Caco-2 (cell line): ENCODE measurements at regions of chr5 and their contacts with region 1.

Region 1: DNA sequence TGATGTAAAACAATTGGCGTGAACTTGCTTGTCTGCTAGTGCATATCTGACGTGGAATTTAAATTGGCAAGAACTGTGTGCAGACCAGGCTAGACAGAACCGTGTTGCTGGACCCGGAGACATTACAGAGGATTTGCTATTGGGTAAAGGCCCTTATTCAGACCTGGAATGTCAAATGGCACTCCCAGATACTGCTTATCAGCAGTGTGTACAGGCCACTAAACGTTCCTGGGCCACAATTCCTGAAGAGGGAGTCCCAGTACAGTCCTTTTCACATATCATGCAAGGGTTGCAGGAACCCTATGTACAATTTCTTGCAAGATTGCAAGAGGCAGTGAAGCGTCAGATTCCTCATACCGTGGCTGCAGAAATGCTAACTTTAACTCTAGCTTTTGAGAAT is 13.5 kb upstream of the MCCC2 start:
- DNase-seq: peak; percentile 52
- H3K4me3 ChIP-seq: no peak overlapping the region
- H3K4me3 Mint-ChIP-seq: no peak overlapping the region
- H3K27ac Mint-ChIP-seq: peak overlapping the region; percentile 71
- H3K4me1 ChIP-seq: peaks cover 15% of the 10 kb centered on the region
- H3K4me1 Mint-ChIP-seq: peaks cover 20% of the 10 kb centered on the region
- H3K27me3 ChIP-seq: no peaks in the 10 kb centered on the region
- H3K27me3 Mint-ChIP-seq: no peaks in the 10 kb centered on the region
- CTCF ChIP-seq: peak in 1 of 2 experiments; percentile 34

Region 2: DNA sequence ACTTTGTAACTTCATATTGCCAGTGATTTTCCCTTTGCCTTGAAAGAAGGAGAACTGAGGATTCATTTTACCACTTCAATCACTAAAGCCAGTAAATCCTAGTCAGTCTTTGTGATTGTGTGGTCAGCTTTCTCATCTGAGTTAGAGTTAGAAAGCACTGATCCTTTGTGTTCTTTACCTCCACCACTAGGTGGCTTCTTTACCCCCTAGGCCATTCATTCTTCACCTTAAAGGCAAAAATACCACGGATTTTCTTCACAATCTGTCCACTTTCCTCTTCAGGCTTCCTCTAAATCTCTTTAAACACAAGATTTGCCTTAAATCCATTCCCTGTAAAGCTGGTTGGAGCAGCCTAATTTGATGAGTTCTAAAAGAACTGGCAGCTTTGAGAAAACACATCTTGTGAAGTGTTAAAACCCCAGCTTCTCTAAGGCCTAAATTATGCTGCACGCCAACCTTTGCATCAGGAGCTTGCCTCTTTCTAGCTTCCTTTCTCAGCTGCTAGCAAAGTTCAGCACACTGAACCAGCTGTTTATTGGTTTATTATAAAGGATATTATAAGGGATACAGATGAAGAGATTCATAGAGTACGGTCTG is 97.7 kb before region 1 on chr5:
- CTCF ChIA-PET with region 1: no interaction called
- POLR2A ChIA-PET with region 1: no interaction called
- intact Hi-C with region 1: no loop called
- DNase-seq: peak in 1 of 2 experiments; percentile 21
- H3K4me3 ChIP-seq: no peak overlapping the region
- H3K4me3 Mint-ChIP-seq: no peak overlapping the region
- H3K27ac Mint-ChIP-seq: no peak overlapping the region
- H3K4me1 ChIP-seq: no peaks in the 10 kb centered on the region
- H3K4me1 Mint-ChIP-seq: no peaks in the 10 kb centered on the region
- H3K27me3 ChIP-seq: no peaks in the 10 kb centered on the region
- H3K27me3 Mint-ChIP-seq: no peaks in the 10 kb centered on the region
- CTCF ChIP-seq: peak; percentile 59 to 67

Region 3: GRCh38 chr5:71586941-71587765 is 13.6 kb after region 1 on chr5 and contains the start of gene MCCC2:
- CTCF ChIA-PET with region 1: interaction called, 3 read pairs
- POLR2A ChIA-PET with region 1: interaction called, 5 read pairs
- intact Hi-C with region 1: loop called (anchors 1 kb)
- DNase-seq: peak; percentile 99
- H3K4me3 ChIP-seq: peak within 1 kb of the TSS; percentile 87
- H3K4me3 Mint-ChIP-seq: peak within 1 kb of the TSS; percentile 97
- H3K27ac Mint-ChIP-seq: peak within 1 kb of the TSS; percentile 99
- H3K4me1 ChIP-seq: peaks cover 8% of the 10 kb centered on the region
- H3K4me1 Mint-ChIP-seq: peaks cover 21% of the 10 kb centered on the region
- H3K27me3 ChIP-seq: no peaks in the 10 kb centered on the region
- H3K27me3 Mint-ChIP-seq: no peaks in the 10 kb centered on the region
- CTCF ChIP-seq: no peak
- total RNA-seq, gene MCCC2: 113 and 124 TPM in 2 replicates

Region 4: GRCh38 chr5:71601222-71602041 is 27.8 kb after region 1 on chr5:
- CTCF ChIA-PET with region 1: interaction called, 3 read pairs
- POLR2A ChIA-PET with region 1: no interaction called
- intact Hi-C with region 1: loop called (anchors 1 kb)
- DNase-seq: peak; percentile 54 to 62
- H3K4me3 ChIP-seq: no peak overlapping the region
- H3K4me3 Mint-ChIP-seq: no peak overlapping the region
- H3K27ac Mint-ChIP-seq: no peak overlapping the region
- H3K4me1 ChIP-seq: no peaks in the 10 kb centered on the region; the same call in 1 of the 2 replicates
- H3K4me1 Mint-ChIP-seq: no peaks in the 10 kb centered on the region
- H3K27me3 ChIP-seq: no peaks in the 10 kb centered on the region
- H3K27me3 Mint-ChIP-seq: no peaks in the 10 kb centered on the region
- CTCF ChIP-seq: peak; percentile 73 to 80

Region 5: DNA sequence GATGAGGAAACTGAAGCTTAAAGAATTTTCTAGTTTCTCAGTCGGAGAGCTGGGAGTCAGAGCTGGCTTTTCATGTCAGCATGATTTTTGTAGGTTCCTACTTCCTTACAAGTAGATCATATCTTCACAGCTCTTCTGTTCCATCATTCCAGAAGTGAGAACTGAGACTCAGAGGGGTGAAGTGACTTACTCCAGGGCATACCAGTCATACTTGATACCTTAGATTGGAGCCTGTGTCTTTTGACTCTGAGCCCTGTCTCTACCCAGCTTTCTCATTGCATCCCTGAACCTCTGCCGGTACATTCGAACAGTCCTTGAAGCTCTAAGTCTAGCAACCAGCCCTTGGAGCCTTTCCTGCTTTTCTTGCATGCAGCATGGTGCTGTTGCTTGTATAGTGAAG is 66.8 kb after region 1 on chr5:
- CTCF ChIA-PET with region 1: no interaction called
- POLR2A ChIA-PET with region 1: no interaction called
- intact Hi-C with region 1: loop called (anchors 5 kb)
- DNase-seq: no peak
- H3K4me3 ChIP-seq: no peak overlapping the region
- H3K4me3 Mint-ChIP-seq: no peak overlapping the region
- H3K27ac Mint-ChIP-seq: no peak overlapping the region
- H3K4me1 ChIP-seq: no peaks in the 10 kb centered on the region
- H3K4me1 Mint-ChIP-seq: no peaks in the 10 kb centered on the region
- H3K27me3 ChIP-seq: no peaks in the 10 kb centered on the region
- H3K27me3 Mint-ChIP-seq: no peaks in the 10 kb centered on the region
- CTCF ChIP-seq: no peak

Region 6: DNA sequence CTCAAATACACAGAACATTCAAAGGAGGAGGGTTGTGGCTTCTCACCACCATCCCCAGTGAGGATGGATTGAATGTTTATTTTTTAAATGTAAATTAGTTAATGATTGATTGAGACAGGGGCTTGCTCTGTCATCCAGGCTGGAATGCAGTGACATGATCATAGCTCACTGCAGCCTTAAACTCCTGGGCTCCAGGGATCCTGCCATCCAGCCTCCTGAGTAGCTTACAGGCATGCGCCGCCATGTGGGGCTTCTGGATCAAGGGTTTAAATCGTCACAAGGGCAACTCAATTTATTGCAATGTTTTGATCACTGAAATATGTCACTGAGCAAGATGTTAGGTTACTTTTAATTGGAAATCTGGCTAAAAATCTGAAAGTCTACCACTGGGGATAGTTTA is 90.0 kb after region 1 on chr5:
- CTCF ChIA-PET with region 1: no interaction called
- POLR2A ChIA-PET with region 1: no interaction called
- intact Hi-C with region 1: loop called (anchors 1 kb)
- DNase-seq: peak; percentile 51 to 66
- H3K4me3 ChIP-seq: no peak overlapping the region
- H3K4me3 Mint-ChIP-seq: no peak overlapping the region
- H3K27ac Mint-ChIP-seq: no peak overlapping the region
- H3K4me1 ChIP-seq: no peaks in the 10 kb centered on the region
- H3K4me1 Mint-ChIP-seq: no peaks in the 10 kb centered on the region
- H3K27me3 ChIP-seq: no peaks in the 10 kb centered on the region
- H3K27me3 Mint-ChIP-seq: no peaks in the 10 kb centered on the region
- CTCF ChIP-seq: peak in 1 of 2 experiments; percentile 36